HEK293 (cell line): ENCODE measurements at regions of chr11 and their contacts with region 1.

Region 1: DNA sequence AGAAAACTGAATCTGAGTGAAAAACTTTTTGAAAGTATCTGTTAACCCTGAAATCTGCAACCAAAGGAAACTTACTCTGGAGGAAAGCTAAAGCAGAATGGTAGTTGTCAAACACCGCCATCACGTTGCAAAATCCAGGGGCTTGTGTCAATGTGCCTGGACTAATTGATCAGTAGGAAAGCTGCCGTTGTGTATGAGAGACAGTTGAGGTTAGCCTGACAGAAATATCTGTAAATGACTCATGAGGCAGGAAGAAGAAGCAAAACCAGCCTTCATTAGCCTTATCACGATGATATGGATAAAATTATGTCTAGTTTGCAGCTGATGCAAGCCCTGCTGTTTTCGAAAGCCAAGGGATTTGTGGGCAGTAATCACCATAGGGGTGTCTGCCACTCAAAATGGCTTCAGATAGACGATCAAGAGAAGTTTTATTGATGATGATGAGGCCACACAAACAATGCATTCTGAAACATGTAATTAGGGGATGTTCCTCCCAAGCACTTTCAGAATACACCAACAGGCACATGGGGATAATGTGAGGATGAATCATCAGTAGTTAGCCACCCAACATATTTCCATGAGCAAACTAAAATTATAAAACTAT is 8.9 kb downstream of the SCGB1A1 start:
- H3K4me3 ChIP-seq: no peak overlapping the region
- H3K27ac ChIP-seq: no peak overlapping the region
- H3K4me1 ChIP-seq: no peaks in the 10 kb centered on the region; the same call in 1 of the 2 replicates
- CTCF ChIP-seq: no peak

Region 2: GRCh38 chr11:61488651-61489291 is 939.0 kb before region 1 on chr11:
- CTCF ChIA-PET with region 1: no interaction called
- POLR2A ChIA-PET with region 1: no interaction called
- H3K4me3 ChIP-seq: no peak overlapping the region
- H3K27ac ChIP-seq: no peak overlapping the region
- H3K4me1 ChIP-seq: no peaks in the 10 kb centered on the region
- CTCF ChIP-seq: no peak

Region 3: DNA sequence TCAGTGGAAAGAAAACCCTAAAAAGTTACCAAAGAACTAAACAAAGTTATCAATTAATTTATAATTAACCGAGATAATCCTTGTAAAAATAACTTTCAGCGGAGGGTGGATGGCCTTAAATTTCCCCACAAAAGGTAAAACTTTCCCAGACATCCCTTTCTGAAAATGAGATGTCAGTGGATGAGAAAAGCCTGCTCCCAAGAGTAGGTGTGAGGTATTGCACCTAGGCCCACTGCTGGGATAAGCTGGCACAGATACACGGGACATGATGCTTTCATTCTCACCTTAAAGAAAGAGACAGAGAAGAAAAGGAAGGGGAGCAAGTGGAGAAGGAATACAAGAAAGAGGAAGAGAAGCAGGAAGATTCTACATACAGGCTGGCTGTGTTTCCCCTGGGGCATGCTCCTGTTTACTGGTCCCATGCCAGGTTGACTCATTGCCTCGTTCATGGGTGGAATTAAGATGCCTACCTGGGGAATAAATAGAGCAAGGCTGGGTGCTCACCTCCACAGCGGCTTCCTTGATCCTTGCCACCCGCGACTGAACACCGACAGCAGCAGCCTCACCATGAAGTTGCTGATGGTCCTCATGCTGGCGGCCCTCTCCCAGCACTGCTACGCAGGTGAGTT is 158.0 kb before region 1 on chr11 and contains the start of gene SCGB2A2:
- CTCF ChIA-PET with region 1: no interaction called
- POLR2A ChIA-PET with region 1: no interaction called
- H3K4me3 ChIP-seq: no peak within 1 kb of the TSS
- H3K27ac ChIP-seq: no peak within 1 kb of the TSS
- H3K4me1 ChIP-seq: no peaks in the 10 kb centered on the region
- CTCF ChIP-seq: no peak

Region 4: GRCh38 chr11:62400760-62401159 is 27.0 kb before region 1 on chr11:
- CTCF ChIA-PET with region 1: interaction called, 36 read pairs
- POLR2A ChIA-PET with region 1: interaction called, 4 read pairs
- H3K4me3 ChIP-seq: no peak overlapping the region
- H3K27ac ChIP-seq: no peak overlapping the region
- H3K4me1 ChIP-seq: no peaks in the 10 kb centered on the region
- CTCF ChIP-seq: no peak

Region 5: GRCh38 chr11:62438641-62439040 is 10.9 kb after region 1 on chr11:
- CTCF ChIA-PET with region 1: interaction called, 13 read pairs
- POLR2A ChIA-PET with region 1: interaction called, 3 read pairs
- H3K4me3 ChIP-seq: no peak overlapping the region
- H3K27ac ChIP-seq: no peak overlapping the region
- H3K4me1 ChIP-seq: no peaks in the 10 kb centered on the region
- CTCF ChIP-seq: no peak

Region 6: GRCh38 chr11:62449451-62449851 is 21.7 kb after region 1 on chr11:
- CTCF ChIA-PET with region 1: interaction called, 20 read pairs
- POLR2A ChIA-PET with region 1: no interaction called
- H3K4me3 ChIP-seq: no peak overlapping the region
- H3K27ac ChIP-seq: no peak overlapping the region
- H3K4me1 ChIP-seq: no peaks in the 10 kb centered on the region
- CTCF ChIP-seq: no peak

Region 7: DNA sequence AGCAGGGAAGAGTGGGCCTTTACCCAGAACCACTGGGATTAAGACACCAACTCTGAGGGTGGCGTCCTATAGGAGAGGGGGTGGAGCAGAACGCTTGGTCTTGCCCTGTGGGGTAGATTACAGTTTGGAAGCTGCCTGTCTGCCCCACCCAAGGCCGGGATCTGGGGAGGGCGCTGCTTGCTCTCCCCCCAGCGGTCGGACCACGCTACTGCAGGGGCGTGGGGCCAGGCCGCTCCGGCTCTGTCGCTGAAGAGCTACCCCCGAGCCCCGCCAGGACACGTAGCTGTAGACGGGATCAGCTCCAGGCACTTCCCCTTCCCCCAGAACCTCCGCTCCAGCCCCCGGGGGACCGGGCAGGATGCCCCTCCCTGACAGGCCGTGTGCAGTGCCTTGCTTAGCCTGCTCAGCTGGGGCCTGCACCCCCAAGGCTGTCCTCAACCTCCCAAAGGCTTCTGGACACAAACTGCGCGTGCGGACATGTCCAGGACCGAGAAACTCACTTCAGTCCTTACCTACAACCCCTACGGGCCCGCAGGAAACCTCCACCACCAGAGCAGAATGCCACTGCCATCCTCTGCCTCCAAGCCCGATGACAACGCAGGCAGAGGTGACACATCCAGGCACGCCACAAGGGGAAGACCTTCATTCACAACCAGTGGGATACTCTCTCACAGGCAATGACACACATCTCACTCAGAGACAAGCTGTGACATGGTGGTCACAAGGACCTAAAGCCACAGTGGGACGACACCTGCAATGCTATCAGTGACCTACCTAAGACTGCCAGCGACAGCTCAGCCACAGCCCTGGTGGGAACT is 115.2 kb after region 1 on chr11:
- CTCF ChIA-PET with region 1: interaction called, 188 read pairs
- POLR2A ChIA-PET with region 1: interaction called, 18 read pairs
- H3K4me3 ChIP-seq: peak overlapping the region; percentile 20
- H3K27ac ChIP-seq: no peak overlapping the region
- H3K4me1 ChIP-seq: peaks cover 7% of the 10 kb centered on the region
- CTCF ChIP-seq: peak; percentile 95

Region 8: GRCh38 chr11:62648185-62648966 is 220.6 kb after region 1 on chr11:
- CTCF ChIA-PET with region 1: no interaction called
- POLR2A ChIA-PET with region 1: no interaction called
- H3K4me3 ChIP-seq: no peak overlapping the region
- H3K27ac ChIP-seq: no peak overlapping the region
- H3K4me1 ChIP-seq: peaks cover 3% of the 10 kb centered on the region; the same call in 1 of the 2 replicates
- CTCF ChIP-seq: no peak